ENCODE measurements at regions of chr4 and their contacts with region 1.

Region 1: GRCh38 chr4:24419181-24420034 is 164.9 kb downstream of the DHX15 start:
- DNase-seq: peak; percentile 78
- CTCF ChIP-seq: peak; percentile 96

Region 2: GRCh38 chr4:22897520-22898108 is 1521.8 kb before region 1 on chr4:
- in situ Hi-C with region 1: loop called (anchors 25 kb)
- DNase-seq: peak; percentile 30
- CTCF ChIP-seq: peak; percentile 48

Region 3: GRCh38 chr4:23135792-23136645 is 1283.4 kb before region 1 on chr4:
- in situ Hi-C with region 1: loop called (anchors 25 kb)
- DNase-seq: peak; percentile 22
- CTCF ChIP-seq: peak; percentile 59

Region 4: GRCh38 chr4:24229976-24230375 is 189.4 kb before region 1 on chr4:
- in situ Hi-C with region 1: no loop called
- DNase-seq: no peak
- CTCF ChIP-seq: no peak